Lower leg skin (tissue), 4 donors: ENCODE measurements at regions of chr3 and their contacts with region 1.

Region 1: DNA sequence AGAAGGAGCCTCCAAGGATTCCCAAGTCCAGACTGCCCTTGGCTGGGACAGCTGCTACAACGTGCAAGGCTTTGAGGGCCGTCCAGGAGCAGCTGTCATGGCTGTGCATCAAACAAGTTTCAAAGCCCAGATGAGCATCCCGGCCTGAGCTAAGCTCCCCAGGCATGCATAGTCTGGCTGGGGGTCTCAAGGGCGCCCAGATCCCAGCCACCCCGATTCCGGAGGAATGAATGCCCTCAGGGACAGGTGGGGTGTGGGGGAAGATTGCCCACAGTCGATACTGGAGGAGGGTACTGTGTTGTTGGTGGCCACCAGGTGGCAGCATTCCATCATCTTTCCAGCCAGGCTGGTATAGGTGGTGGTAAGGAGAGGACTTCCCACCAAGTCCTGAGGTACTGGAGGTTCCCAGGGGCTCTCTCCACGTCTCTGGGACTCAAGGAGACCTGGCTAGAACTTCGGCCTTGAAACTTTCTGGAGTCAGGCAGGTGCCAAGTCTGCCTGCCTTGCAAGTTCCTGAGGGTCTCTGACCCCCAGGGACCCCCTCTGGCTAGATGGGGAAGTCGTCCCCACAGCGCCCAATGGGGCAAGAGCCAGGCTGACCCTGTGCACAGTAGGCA is 32.8 kb downstream of the RBM5 start:
- DNase-seq: peak; percentile 58 to 95
- H3K4me3 ChIP-seq: no peak overlapping the region
- CTCF ChIP-seq: no peak
- POLR2A ChIP-seq: no peak

Region 2: GRCh38 chr3:50192689-50193141 is 71.2 kb after region 1 on chr3:
- intact Hi-C with region 1: loop called (anchors 2 kb)
- DNase-seq: peak; percentile 62 to 96
- H3K4me3 ChIP-seq: no peak overlapping the region
- CTCF ChIP-seq: peak in 1 of 3 donors; percentile 62
- POLR2A ChIP-seq: no peak

Region 3: GRCh38 chr3:50272911-50273693 is 151.6 kb after region 1 on chr3:
- intact Hi-C with region 1: loop called (anchors 10 kb)
- DNase-seq: peak; percentile 79 to 97
- H3K4me3 ChIP-seq: no peak overlapping the region
- CTCF ChIP-seq: peak in 1 of 3 donors; percentile 98
- POLR2A ChIP-seq: no peak

Region 4: DNA sequence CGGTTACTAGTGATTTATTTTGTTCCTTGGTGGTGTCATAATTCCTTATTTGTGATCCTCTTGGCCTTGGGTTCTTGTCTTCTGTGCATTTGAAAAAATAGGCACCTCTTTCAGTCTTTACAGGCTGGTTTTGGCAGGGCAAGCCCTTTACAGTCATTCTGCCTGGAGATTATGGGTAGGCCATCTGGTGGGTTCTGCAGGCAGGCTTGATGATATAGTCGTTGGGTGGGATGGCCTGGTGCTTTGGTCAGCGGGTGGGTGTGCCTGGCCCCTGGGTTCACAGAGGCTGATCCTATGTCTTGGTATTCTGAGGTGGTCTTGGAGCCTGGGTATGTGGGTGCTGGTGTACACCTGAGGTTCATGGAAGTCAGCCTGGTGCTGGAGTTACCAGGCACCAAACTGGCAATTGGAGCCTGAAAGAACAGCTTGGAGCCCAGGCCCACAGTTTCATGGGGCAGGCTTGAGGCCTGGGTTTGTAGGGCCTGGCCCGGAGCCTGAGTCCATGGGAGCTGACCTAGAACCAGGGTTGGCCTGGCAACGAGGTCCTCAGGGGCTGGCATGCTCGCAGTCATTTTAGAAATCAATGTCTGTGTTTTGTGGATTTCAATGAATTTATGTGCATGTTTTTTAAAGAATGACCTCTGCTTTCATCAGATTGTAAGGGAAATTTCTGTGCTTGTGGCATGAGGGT is 616.5 kb after region 1 on chr3:
- intact Hi-C with region 1: no loop called
- DNase-seq: no peak
- H3K4me3 ChIP-seq: no peak overlapping the region
- CTCF ChIP-seq: no peak
- POLR2A ChIP-seq: no peak